Right ventricle myocardium superior (tissue), 1 donor: ENCODE measurements at regions of chr1 and their contacts with region 1.

Region 1: DNA sequence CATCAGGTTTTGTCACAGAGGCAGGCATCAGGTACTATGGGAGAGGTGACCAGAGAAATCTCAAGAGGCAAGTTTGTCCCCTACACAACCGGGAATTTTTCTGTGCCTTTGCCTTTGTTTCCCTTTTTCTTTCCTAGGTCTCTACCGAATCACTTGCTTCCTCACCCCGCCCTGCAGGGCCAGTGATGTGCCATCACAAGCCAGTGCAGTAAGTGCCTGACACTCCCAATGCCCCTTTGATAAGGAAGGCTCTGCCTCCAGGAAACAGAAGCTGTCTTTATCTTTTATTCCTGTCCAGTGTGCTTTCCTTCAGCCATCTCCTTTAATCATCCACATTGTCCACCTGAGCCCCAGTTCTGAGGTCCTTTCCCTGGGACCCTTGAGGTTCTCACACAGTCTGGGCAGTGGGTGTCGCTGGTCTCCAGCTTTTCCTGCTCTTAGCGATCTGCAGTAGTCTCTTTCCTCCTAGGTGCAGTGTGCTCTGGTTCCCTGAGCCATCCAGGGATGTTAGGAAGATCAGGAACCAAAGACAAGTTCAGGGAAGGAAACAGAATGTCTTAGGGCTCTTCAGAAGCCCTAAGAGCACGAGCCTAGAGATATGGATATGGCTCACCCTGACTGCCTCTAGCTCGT is 36.6 kb downstream of the GJA5 start:
- DNase-seq: peak; percentile 52
- ATAC-seq: peak; percentile 91

Region 2: DNA sequence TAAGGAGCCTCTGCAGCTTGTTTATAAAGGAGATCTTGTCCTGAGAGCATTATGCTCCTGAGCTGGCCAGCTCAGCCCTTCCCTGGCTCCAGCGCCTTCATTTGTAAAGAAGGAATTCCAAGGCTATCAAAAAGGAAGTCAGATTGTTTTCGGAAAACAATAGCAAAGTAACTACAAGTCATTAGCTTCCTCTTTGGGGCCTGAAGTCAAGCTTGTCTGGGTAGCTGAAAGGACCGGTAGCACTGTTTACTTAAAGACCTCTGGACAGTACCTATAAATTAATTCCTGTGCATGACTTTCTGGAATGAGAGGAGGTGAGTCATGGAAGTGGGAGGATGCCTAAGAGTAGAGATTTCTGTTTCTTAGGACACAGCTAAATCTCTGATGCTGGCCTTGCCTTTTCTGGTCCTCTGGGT is 57.3 kb after region 1 on chr1:
- intact Hi-C with region 1: no loop called
- DNase-seq: no peak
- ATAC-seq: peak; percentile 20

Region 3: DNA sequence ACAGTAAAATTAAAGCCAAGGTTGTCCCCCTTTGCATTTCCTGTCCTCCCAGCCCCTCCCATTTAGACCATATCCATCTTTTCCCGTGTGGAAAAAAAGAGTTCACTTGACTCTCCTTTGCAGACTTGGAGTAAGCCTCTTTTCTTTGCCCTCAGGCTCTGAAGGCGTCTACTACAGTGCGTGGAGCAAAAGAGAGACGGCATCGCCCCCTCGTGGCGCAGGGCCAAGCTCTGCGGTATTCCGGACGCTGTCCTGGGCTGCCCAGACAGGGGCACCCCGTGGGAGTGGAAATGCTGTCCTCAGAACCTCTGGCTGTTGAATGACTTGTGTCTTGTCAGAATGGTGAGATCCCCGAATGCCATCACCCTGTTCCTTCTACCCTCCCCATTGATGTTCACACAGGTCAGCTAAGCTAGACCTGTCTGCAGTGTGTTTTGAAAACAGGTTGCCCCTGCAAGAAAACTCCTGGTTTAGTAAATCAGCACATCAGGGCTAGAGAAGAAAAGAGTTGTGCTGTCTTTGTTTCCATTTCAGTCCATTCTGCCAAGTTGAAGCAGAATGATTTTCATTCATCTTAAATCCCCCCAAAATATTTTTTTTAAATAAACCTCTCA is 166.5 kb after region 1 on chr1:
- intact Hi-C with region 1: loop called (anchors 2 kb)
- DNase-seq: peak; percentile 84
- ATAC-seq: peak; percentile 92